ENCODE measurements at regions of chr1 and their contacts with region 1.

Region 1: DNA sequence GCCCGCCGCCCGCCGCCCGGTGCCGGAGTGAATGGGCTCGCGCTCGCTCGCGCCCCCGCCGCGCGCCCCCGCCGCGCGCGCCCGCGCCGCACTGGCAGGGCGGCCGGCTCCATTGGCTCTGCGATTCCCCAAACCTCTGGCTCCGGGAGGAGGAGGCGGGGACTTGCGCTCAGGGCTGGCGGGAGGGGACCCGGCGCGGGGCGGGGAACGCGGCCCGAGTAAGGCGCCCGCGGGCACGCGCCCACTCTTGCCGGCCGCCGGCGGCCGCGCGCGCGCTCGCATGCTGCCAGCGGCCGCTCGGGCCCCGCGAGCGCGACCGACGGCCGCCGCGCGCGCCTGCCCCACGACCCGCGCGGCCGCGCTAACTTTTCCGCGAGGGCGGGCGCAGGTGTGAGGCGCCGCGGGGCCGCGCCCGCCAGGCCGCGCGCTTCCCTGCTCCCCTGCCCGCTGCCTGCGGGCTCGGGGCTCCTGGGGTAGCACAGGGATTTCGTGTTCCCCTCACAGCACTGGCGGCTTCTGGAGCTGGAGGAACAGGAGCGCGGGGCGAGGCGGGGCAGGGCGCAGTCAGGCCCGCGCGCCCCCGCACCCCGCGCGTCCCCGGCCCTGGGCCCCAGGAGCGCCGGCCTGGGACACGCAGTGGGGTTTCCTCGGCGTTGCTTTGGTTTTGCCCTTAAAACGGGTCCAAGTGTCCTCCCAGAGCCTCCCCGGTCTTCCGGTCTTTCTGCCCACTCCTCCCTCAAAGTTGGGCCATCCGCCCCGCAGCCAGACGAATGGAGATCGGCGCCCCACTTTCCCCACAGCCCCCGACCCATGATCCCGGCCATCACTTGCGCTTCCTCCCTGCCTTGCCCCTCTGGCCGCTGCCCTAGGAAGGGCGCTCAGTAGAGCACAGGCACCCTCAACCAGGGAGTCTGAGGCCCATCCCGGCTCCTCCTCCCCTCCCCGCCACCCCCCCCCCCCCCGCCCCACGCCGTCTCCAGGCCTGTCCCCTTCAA is 101.5 kb downstream of the CASZ1 start:
- DNase-seq: no peak
- ATAC-seq: peak; percentile 27
- H3K4me3 ChIP-seq: peak overlapping the region; percentile 44; the same call in 1 of the 2 replicates
- H3K27ac ChIP-seq: no peak overlapping the region
- H3K4me1 ChIP-seq: peaks cover 15% of the 10 kb centered on the region
- H3K27me3 ChIP-seq: no peaks in the 10 kb centered on the region; a peak in 1 of 4 replicates
- CTCF ChIP-seq: no peak
- EP300 ChIP-seq: no peak
- POLR2A ChIP-seq: no peak
- RAD21 ChIP-seq: no peak

Region 2: GRCh38 chr1:10117865-10118264 is 577.1 kb before region 1 on chr1:
- CTCF ChIA-PET with region 1: no interaction called
- POLR2A ChIA-PET with region 1: no interaction called
- RAD21 ChIA-PET with region 1: no interaction called
- SMC1A ChIA-PET with region 1: no interaction called
- in situ Hi-C with region 1: no loop called
- intact Hi-C with region 1: no loop called
- DNase-seq: no peak
- ATAC-seq: no peak
- H3K4me3 ChIP-seq: no peak overlapping the region
- H3K27ac ChIP-seq: no peak overlapping the region
- H3K4me1 ChIP-seq: no peaks in the 10 kb centered on the region
- H3K27me3 ChIP-seq: no peaks in the 10 kb centered on the region
- CTCF ChIP-seq: no peak
- EP300 ChIP-seq: no peak
- POLR2A ChIP-seq: no peak
- RAD21 ChIP-seq: no peak

Region 3: DNA sequence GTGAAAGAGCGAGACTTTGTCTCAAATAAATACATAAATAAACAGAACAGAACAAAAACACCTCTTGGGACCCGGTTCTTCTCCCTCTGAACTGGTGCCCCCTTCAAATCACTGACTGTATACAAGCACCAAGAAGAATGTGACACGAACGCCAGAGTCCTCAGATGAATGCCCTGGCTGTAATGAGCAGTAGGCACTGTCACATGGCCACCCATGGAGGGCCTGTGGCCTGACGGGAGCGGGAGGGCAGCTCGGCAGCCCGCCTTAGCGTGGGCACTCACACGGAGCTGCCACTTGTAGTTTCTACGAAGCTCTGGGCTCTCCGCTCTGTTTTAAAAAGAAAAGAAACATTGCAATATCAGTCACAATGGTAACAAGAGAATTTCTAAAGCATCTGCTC is 74.2 kb before region 1 on chr1:
- CTCF ChIA-PET with region 1: no interaction called
- POLR2A ChIA-PET with region 1: no interaction called
- RAD21 ChIA-PET with region 1: no interaction called
- SMC1A ChIA-PET with region 1: no interaction called
- in situ Hi-C with region 1: no loop called
- intact Hi-C with region 1: no loop called
- DNase-seq: no peak
- ATAC-seq: no peak
- H3K4me3 ChIP-seq: no peak overlapping the region
- H3K27ac ChIP-seq: no peak overlapping the region
- H3K4me1 ChIP-seq: no peaks in the 10 kb centered on the region
- H3K27me3 ChIP-seq: no peaks in the 10 kb centered on the region
- CTCF ChIP-seq: no peak
- EP300 ChIP-seq: no peak
- POLR2A ChIP-seq: no peak
- RAD21 ChIP-seq: no peak

Region 4: GRCh38 chr1:10867138-10867721 is 172.3 kb after region 1 on chr1:
- CTCF ChIA-PET with region 1: interaction called, 22 read pairs
- POLR2A ChIA-PET with region 1: no interaction called
- RAD21 ChIA-PET with region 1: no interaction called
- SMC1A ChIA-PET with region 1: interaction called, 6 read pairs
- in situ Hi-C with region 1: no loop called
- intact Hi-C with region 1: loop called (anchors 2 kb)
- DNase-seq: no peak
- ATAC-seq: peak; percentile 96
- H3K4me3 ChIP-seq: peak overlapping the region; percentile 20; the same call in 1 of the 2 replicates
- H3K27ac ChIP-seq: no peak overlapping the region
- H3K4me1 ChIP-seq: 0 out of 2 replicates have a peak, but pooled peaks cover 5% of the 10 kb centered on the region
- H3K27me3 ChIP-seq: peaks cover 2 to 6% of the 10 kb centered on the region in 2 experiments; a peak in 3 of 4 replicates
- CTCF ChIP-seq: peak; percentile 41 to 68 (median 51); a peak in 5 of 6 replicates
- EP300 ChIP-seq: no peak
- POLR2A ChIP-seq: no peak
- RAD21 ChIP-seq: peak; percentile 67

Region 5: GRCh38 chr1:10941891-10942541 is 247.1 kb after region 1 on chr1:
- CTCF ChIA-PET with region 1: interaction called, 4 read pairs
- POLR2A ChIA-PET with region 1: no interaction called
- RAD21 ChIA-PET with region 1: interaction called, 3 read pairs
- SMC1A ChIA-PET with region 1: no interaction called
- in situ Hi-C with region 1: no loop called
- intact Hi-C with region 1: loop called (anchors 5 kb)
- DNase-seq: no peak
- ATAC-seq: peak; percentile 55
- H3K4me3 ChIP-seq: no peak overlapping the region
- H3K27ac ChIP-seq: no peak overlapping the region
- H3K4me1 ChIP-seq: peaks cover 21% of the 10 kb centered on the region
- H3K27me3 ChIP-seq: peaks cover 4 to 8% of the 10 kb centered on the region in 2 experiments; a peak in 3 of 4 replicates
- CTCF ChIP-seq: peak; percentile 74 to 98 (median 93)
- EP300 ChIP-seq: no peak
- POLR2A ChIP-seq: no peak
- RAD21 ChIP-seq: peak; percentile 70